Mammary epithelial cell (primary cell): ENCODE measurements at regions of chr9 and their contacts with region 1.

Region 1: DNA sequence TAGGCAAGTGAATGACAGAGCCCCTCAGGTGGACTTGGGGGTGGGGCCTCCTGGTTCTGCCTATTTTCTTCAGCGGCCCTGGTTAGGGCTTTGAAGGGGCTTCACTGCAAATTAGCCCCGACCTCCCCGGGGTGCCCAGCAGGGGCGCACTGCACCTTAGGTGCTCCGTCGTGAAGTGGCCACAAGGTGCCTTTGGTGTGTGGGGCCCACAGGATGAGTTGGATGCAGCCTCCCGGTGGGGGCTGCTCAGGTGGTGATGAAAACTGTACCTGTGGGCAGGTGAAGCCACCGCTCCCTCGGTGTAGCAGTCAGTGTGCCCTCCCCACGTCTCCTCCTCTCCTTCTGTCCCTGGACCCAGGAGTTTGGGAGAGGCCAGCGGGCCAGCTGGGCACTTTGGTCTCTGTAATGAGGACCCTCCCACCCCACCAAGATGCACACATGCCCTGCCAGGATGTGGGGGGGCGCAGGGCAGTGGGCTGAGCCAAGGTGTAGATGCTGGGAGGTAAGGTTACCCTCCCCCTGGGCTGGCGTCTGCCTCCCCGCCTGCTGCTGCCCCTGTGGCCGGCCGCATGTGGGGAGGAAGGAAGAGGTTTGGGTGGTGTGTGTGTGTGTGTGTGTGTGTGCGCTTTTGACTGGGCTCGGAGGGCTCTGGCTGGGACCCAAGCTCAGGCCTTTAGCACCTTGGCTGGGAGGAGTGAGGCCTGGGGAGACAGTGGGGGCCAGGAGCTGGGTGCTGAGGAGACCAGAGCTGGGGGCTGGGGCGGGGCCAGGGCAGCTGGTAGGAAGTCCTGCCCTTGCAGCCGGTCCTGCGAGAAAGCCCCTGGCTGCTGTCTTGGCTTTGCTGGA is 55.6 kb downstream of the RXRA start:
- DNase-seq: no peak
- H3K4me3 ChIP-seq: no peak overlapping the region
- H3K27ac ChIP-seq: no peak overlapping the region
- H3K4me1 ChIP-seq: peaks cover 74% of the 10 kb centered on the region
- H3K27me3 ChIP-seq: no peaks in the 10 kb centered on the region
- CTCF ChIP-seq: peak in 1 of 2 donors; percentile 11

Region 2: GRCh38 chr9:134163353-134164196 is 218.3 kb before region 1 on chr9:
- CTCF ChIA-PET with region 1: no interaction called
- dilution Hi-C with region 1: no loop called
- in situ Hi-C with region 1: no loop called
- intact Hi-C with region 1: loop called (anchors 2 kb)
- DNase-seq: peak; percentile 25
- H3K4me3 ChIP-seq: peak overlapping the region; percentile 24 to 45 (median 41)
- H3K27ac ChIP-seq: no peak overlapping the region
- H3K4me1 ChIP-seq: peaks cover 5% of the 10 kb centered on the region
- H3K27me3 ChIP-seq: no peaks in the 10 kb centered on the region
- CTCF ChIP-seq: peak in 1 of 2 donors; percentile 13

Region 3: GRCh38 chr9:134407123-134407808 is 25.4 kb after region 1 on chr9:
- CTCF ChIA-PET with region 1: no interaction called
- dilution Hi-C with region 1: no loop called
- in situ Hi-C with region 1: no loop called
- intact Hi-C with region 1: loop called (anchors 2 kb)
- DNase-seq: peak; percentile 90
- H3K4me3 ChIP-seq: peak overlapping the region in 2 of 3 experiments; percentile 1 to 34
- H3K27ac ChIP-seq: peak overlapping the region; percentile 88
- H3K4me1 ChIP-seq: peaks cover 38% of the 10 kb centered on the region
- H3K27me3 ChIP-seq: no peaks in the 10 kb centered on the region
- CTCF ChIP-seq: no peak

Region 4: DNA sequence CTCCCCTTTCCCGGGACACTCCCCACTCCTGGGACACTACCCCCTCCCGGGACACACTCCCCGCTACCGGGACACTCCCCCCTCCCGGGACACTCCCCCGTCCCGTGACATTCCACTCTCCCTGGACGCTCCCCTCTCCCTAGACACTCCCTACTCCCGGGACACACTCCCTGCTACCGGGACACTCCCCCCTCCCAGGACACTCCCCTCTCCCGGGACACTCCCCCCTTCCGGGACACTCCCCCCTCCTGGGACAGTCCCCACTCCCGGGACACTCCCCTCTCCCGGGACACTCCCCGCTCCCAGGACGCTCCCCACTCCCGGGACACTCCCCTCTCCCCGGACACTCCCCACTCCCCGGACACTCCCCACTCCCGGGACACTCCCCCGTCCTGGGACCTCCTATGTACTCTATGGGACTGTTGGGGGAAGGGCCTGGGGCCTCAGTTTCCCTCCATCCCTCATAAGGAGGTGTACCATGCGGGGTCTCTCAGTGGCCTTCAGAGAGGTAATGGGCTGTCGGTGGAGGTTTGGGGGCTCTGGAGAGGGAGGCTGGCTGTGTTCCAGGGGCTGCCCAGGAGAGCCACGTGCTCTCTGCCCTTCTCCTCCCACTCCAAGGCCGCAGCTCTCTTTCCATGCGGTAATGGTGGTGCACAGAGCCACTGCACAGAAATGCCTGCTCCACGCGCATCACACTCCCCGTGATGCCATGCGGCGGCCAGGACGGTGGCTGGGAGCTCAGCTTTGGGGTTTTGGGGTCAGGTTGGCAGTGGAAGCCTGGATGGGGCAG is 40.6 kb after region 1 on chr9:
- CTCF ChIA-PET with region 1: no interaction called
- dilution Hi-C with region 1: no loop called
- in situ Hi-C with region 1: no loop called
- intact Hi-C with region 1: no loop called
- DNase-seq: no peak
- H3K4me3 ChIP-seq: no peak overlapping the region
- H3K27ac ChIP-seq: no peak overlapping the region
- H3K4me1 ChIP-seq: no peaks in the 10 kb centered on the region
- H3K27me3 ChIP-seq: no peaks in the 10 kb centered on the region
- CTCF ChIP-seq: no peak

Region 5: GRCh38 chr9:134899819-134900218 is 517.9 kb after region 1 on chr9:
- CTCF ChIA-PET with region 1: no interaction called
- dilution Hi-C with region 1: no loop called
- in situ Hi-C with region 1: no loop called
- intact Hi-C with region 1: no loop called
- DNase-seq: peak; percentile 3
- H3K4me3 ChIP-seq: no peak overlapping the region
- H3K27ac ChIP-seq: no peak overlapping the region
- H3K4me1 ChIP-seq: no peaks in the 10 kb centered on the region
- H3K27me3 ChIP-seq: no peaks in the 10 kb centered on the region
- CTCF ChIP-seq: no peak

Region 6: DNA sequence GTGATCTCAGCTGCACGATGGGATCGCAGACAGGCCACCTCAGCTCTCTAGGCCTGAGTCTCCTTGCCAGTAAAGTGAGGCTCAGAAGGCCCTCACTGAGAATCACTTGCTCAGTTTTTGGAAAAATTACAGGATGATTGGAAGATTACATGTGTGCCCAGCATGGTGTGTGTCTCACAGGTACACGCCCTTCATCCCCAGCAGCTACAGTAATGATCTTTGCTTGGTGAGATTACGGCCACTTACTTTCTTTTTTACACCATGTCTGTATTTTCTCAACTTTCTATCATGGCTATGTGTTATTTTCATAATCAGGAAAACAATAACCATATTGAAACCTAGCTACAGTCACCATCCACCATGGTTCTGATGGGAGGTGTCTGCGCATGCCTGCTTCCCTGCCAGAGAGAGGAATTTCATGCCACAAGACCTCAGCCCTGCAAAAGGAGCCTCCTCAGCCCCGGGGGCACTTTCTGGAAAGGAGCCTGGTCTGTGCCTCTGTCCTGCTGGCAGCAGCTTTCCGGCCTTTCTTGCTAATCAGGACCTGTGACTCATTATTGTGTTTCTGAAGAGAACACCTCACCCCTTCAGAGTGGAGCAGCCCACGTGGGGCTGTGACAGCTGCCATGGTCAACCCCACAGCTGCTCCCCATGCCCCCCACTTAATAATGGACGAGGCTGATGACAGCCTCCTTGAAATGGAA is 641.3 kb after region 1 on chr9:
- CTCF ChIA-PET with region 1: no interaction called
- dilution Hi-C with region 1: no loop called
- in situ Hi-C with region 1: no loop called
- intact Hi-C with region 1: no loop called
- DNase-seq: peak; percentile 79
- H3K4me3 ChIP-seq: no peak overlapping the region
- H3K27ac ChIP-seq: no peak overlapping the region
- H3K4me1 ChIP-seq: no peaks in the 10 kb centered on the region
- H3K27me3 ChIP-seq: no peaks in the 10 kb centered on the region
- CTCF ChIP-seq: no peak